GM10248 (cell line): ENCODE measurements at regions of chr22 and their contacts with region 1.

Region 1: DNA sequence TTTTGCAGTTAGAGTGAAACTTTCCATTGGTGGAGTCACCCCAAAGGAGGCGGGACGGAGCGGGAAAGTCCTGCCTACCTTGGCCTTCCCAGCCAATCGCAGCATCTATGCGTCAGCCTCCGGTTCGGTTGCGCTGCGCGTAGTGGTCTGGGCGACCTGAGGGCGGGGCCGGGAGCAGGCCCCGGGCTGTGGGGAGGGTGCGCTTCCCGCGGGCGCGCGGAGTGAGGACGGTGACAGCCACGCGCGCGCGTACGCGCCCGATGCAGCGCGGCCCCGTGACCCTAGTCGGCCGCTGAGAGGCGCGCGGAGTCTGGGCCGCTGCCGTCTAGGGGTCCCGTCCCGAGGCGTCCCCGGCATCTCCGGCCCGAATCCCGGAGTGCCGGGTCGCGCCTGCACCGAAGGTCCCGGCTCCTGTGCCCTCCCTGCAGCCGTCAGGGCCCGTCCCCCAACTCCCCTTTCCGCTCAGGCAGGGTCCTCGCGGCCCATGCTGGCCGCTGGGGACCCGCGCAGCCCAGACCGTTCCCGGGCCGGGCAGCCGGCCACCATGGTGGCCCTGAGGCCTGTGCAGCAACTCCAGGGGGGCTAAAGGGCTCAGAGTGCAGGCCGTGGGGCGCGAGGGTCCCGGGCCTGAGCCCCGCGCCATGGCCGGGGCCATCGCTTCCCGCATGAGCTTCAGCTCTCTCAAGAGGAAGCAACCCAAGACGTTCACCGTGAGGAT is at the start of gene NF2:
- DNase-seq: peak; percentile 99
- CTCF ChIP-seq: peak; percentile 25

Region 2: GRCh38 chr22:29570912-29571549 is 32.5 kb before region 1 on chr22:
- CTCF ChIA-PET with region 1: no interaction called
- POLR2A ChIA-PET with region 1: no interaction called
- DNase-seq: no peak
- CTCF ChIP-seq: no peak

Region 3: GRCh38 chr22:29587938-29588699 is 15.4 kb before region 1 on chr22:
- CTCF ChIA-PET with region 1: interaction called, 45 read pairs
- POLR2A ChIA-PET with region 1: no interaction called
- DNase-seq: no peak
- CTCF ChIP-seq: no peak

Region 4: DNA sequence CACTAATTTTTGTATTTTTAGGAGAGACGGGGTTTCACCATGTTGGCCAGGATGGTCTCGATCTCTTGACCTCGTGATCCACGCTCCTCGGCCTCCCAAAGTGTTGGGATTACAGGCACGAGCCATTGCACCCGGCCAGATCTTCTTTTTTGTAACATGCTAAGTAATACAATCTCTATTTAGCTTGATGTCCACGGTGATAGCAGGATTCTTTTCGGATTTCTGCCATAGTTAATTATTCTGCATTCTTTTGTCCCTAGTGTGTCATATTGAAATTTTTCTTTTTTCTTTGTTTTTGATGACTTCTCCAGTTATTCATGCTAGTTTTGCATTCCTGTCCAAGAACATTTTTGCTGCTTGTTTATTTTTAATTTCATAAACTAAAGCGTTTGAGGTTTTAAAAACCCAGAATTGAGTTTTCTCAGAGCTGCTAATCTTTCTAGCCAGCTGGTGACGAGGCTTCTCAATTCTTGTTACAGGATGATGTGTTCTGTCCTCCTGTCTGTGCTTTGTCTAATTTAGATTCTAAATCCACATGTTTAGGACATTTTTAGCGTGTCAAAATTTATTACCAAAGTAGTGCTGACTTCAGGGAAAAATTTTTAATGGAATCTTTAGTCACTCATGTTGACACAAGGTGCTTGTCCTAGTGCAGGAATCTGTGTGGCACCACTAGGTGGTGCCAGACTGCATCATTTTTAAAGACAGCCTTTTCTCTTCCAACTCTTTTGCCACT is 21.7 kb after region 1 on chr22:
- CTCF ChIA-PET with region 1: interaction called, 33 read pairs
- POLR2A ChIA-PET with region 1: no interaction called
- DNase-seq: peak; percentile 40
- CTCF ChIP-seq: peak; percentile 81